Kidney (tissue), 22 donors: ENCODE measurements at regions of chr11 and their contacts with region 1.

Region 1: GRCh38 chr11:68266121-68266891 is 5.5 kb downstream of the C11orf24 start:
- DNase-seq: no peak
- H3K4me3 ChIP-seq: no peak overlapping the region
- H3K27ac ChIP-seq: no peak overlapping the region
- H3K4me1 ChIP-seq: peaks cover 0 to 16% (median 8%) of the 10 kb centered on the region in 3 donors
- H3K27me3 ChIP-seq: no peaks in the 10 kb centered on the region
- CTCF ChIP-seq: no peak

Region 2: DNA sequence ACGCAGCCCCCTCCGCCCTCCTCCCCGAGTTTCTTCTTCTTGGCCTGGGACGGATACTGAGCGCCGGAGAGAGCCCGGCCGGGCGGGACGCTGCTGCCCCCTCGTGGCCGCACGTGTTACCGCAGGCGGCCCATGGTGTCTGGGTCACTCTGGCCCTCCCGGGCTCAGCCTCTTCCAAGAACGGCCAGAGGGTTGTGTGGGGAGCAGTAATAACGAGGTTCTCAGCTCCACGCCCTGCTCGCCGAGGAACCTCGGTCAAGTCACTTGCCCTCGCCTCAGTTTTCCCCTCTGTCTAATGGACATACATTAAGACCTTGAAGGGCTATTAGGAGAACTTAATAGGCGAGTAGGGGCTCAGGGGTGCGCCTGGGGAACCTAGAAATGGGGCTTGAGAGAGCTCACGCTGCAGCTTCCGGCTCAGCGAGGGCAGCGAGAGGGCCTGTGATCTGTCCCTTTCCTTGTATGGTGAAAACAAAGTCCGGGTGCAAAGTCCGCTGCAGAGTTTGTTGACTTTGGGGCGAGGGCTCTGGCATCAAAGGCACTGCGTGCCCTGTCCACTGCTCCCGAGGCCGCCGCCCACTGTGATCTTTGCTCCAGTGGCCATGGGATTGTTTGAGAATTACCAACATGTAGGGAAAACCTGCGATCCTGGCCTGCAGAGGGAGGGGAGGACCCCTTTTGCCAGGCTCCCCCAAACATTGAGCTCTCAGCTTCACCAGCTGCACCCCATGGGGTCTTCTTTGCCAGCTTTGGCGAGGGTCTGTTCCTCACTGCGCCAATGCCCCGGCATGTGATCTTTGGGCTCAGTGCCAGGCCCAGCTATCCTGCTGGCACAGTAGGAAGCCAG is 31.7 kb after region 1 on chr11:
- intact Hi-C with region 1: loop called (anchors 5 kb)
- DNase-seq: peak; percentile 73 to 87 (median 82)
- H3K4me3 ChIP-seq: peak overlapping the region in 1 of 3 donors; percentile 23
- H3K27ac ChIP-seq: peak overlapping the region; percentile 88
- H3K4me1 ChIP-seq: peaks cover 0 to 13% (median 0%) of the 10 kb centered on the region in 3 donors
- H3K27me3 ChIP-seq: no peaks in the 10 kb centered on the region
- CTCF ChIP-seq: peak; percentile 93

Region 3: GRCh38 chr11:68447015-68447801 is 180.9 kb after region 1 on chr11:
- intact Hi-C with region 1: loop called (anchors 10 kb)
- DNase-seq: peak; percentile 75 to 90 (median 82)
- H3K4me3 ChIP-seq: no peak overlapping the region
- H3K27ac ChIP-seq: no peak overlapping the region
- H3K4me1 ChIP-seq: no peaks in the 10 kb centered on the region
- H3K27me3 ChIP-seq: no peaks in the 10 kb centered on the region
- CTCF ChIP-seq: peak; percentile 94